A549 (cell line): ENCODE measurements at regions of chr2 and their contacts with region 1.

Region 1: DNA sequence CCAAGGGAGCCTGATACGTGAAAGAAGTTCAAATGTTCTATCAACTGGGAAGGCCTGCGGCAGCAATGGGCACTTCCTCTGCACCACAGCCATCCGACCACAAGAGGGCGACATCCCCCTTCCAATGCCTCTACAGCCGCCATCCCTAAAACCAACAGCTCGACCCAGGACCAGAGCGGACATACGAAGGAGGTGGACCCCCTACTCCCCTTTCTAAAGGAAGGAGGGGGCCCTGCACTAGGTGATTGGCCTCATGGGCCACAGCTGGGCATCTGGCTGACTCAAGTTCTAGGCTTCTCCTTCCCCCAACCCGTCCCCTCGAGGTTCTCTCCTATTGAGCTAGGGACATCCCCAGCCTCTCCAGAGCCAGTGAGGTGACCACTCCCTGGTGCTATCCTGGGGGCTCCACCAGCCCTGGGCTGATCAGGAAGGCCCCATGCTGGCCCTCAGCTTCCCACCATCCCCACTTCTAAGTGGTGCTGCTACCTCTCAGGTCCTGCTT is 217.2 kb downstream of the TNS1 start:
- DNase-seq: peak; percentile 63 to 72
- ATAC-seq: peak; percentile 85 to 90
- H3K4me3 ChIP-seq: no peak overlapping the region
- H3K27ac ChIP-seq: no peak overlapping the region
- H3K4me1 ChIP-seq: peaks cover 3% of the 10 kb centered on the region; the same call in 1 of the 3 replicates
- CTCF ChIP-seq: peak; percentile 95
- EP300 ChIP-seq: no peak
- POLR2A ChIP-seq: no peak
- RAD21 ChIP-seq: peak; percentile 95 to 97

Region 2: DNA sequence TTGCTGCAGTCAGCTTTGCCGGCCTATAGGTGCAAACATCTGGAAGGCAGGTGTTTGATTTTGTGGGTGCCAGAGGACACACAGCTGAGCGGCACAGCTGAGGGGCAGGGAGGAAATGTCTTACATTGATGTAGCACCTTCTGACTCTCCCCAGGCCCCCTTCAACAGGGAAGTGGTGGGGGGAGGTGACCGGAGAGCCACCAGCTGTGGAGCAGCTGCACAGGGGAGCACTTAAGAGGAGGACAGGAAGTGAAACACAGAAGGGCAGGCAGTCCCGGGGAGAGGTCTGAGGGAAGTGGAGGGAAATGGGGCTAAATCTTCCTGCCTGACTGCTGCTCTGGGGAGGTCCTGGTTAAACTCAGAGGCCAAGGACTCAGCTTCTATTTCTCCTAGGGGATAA is 191.9 kb before region 1 on chr2:
- CTCF ChIA-PET with region 1: no interaction called
- POLR2A ChIA-PET with region 1: no interaction called
- DNase-seq: no peak
- ATAC-seq: no peak
- H3K4me3 ChIP-seq: no peak overlapping the region
- H3K27ac ChIP-seq: no peak overlapping the region
- H3K4me1 ChIP-seq: no peaks in the 10 kb centered on the region
- CTCF ChIP-seq: no peak
- EP300 ChIP-seq: no peak
- POLR2A ChIP-seq: no peak
- RAD21 ChIP-seq: no peak

Region 3: DNA sequence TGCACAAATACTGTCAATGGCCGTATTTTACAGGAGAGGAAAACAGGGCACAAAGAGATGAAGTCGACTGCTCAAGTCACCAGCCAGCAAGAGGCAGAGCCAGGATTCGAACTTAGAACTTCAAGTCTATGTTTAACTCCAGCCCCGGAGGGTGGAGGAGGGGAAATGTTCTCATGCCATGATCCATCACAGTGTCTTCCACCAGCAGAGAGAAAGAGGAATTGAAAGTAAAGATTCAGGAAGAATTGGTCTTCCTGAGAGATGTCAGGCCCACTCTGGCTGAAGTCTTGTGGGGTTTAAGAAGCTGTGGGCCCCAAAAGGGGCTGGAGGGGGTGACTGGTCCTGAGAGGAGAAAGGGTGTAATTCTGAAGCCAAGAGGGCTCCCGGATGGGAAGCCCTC is 42.8 kb before region 1 on chr2:
- CTCF ChIA-PET with region 1: no interaction called
- POLR2A ChIA-PET with region 1: no interaction called
- DNase-seq: no peak
- ATAC-seq: no peak
- H3K4me3 ChIP-seq: no peak overlapping the region
- H3K27ac ChIP-seq: no peak overlapping the region
- H3K4me1 ChIP-seq: no peaks in the 10 kb centered on the region
- CTCF ChIP-seq: no peak
- EP300 ChIP-seq: no peak
- POLR2A ChIP-seq: no peak
- RAD21 ChIP-seq: no peak

Region 4: DNA sequence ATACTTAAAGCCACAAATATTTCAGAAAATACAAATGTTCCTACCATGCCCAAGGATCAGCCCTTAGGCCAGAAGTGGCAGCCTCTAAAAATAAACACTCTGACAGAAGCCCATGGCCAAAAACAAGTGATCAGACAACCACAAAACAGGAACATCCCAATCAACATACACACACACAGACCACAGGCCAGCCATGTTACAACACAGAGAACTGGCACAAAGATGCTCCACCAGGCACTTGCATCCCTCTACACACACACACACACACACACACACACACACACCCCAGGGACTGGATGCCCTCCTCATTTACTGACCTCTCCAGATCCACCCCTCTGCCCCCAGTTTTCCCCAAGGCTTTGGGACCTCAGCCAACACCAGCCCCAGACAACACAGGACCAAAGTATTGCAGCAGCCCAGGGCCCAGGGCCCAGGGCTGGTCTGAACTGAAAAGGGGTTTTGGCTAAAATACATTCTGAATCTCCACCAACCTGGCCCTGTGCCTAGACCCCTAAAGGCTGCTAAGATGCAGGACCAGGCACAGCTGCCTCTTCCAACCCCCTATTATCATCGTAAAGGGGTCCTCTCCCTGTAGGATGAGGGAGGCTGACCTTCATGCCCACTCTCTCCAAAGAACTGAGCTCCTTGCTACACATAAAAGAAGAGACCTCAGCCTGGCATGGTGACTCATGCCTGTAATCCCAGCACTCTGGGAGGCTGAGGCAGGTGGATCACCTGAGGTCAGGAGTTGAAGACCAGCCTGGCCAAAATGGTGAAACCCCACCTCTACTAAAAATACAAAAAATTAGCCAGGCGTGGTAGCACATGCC is 65.8 kb after region 1 on chr2:
- CTCF ChIA-PET with region 1: interaction called, 13 read pairs
- POLR2A ChIA-PET with region 1: no interaction called
- DNase-seq: no peak
- ATAC-seq: peak in 1 of 2 experiments; percentile 5; a peak in 1 of 6 replicates
- H3K4me3 ChIP-seq: no peak overlapping the region
- H3K27ac ChIP-seq: peak overlapping the region; percentile 36 to 74; a peak in 4 of 6 replicates
- H3K4me1 ChIP-seq: peaks cover 39% of the 10 kb centered on the region
- CTCF ChIP-seq: no peak
- EP300 ChIP-seq: no peak
- POLR2A ChIP-seq: no peak
- RAD21 ChIP-seq: no peak

Region 5: DNA sequence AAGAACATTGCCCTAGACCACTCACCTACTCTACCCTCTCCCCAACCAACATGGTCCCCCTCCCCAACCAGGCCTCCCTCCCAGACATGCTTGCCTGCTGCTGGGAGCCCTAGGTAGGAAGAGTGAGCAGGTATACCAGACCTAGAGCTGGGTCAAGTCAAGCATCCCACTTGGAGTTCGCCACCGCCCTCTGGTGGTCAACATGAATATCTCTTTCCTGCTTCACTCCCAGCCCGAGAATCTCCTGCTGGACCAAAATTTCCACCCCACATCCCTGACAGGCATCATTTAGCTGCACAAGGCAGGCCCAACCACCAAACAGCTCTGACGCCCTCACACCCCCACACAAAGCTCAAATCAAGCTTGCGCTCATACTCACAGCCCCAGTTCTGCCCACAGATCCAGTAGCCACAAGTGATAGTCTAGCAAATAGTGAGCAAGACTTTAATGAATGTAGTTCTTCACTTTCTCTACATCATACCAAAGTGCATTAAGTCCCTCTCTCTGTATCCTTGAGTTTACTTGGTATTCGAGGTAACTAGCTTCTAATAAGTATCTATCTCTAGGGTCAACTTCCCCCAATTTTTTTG is 101.2 kb after region 1 on chr2:
- CTCF ChIA-PET with region 1: interaction called, 112 read pairs
- POLR2A ChIA-PET with region 1: no interaction called
- DNase-seq: peak; percentile 76 to 81
- ATAC-seq: peak; percentile 80 to 89
- H3K4me3 ChIP-seq: no peak overlapping the region
- H3K27ac ChIP-seq: no peak overlapping the region
- H3K4me1 ChIP-seq: peaks cover 7% of the 10 kb centered on the region; the same call in 2 of the 3 replicates
- CTCF ChIP-seq: peak; percentile 77
- EP300 ChIP-seq: no peak
- POLR2A ChIP-seq: no peak
- RAD21 ChIP-seq: peak; percentile 71 to 81

Region 6: DNA sequence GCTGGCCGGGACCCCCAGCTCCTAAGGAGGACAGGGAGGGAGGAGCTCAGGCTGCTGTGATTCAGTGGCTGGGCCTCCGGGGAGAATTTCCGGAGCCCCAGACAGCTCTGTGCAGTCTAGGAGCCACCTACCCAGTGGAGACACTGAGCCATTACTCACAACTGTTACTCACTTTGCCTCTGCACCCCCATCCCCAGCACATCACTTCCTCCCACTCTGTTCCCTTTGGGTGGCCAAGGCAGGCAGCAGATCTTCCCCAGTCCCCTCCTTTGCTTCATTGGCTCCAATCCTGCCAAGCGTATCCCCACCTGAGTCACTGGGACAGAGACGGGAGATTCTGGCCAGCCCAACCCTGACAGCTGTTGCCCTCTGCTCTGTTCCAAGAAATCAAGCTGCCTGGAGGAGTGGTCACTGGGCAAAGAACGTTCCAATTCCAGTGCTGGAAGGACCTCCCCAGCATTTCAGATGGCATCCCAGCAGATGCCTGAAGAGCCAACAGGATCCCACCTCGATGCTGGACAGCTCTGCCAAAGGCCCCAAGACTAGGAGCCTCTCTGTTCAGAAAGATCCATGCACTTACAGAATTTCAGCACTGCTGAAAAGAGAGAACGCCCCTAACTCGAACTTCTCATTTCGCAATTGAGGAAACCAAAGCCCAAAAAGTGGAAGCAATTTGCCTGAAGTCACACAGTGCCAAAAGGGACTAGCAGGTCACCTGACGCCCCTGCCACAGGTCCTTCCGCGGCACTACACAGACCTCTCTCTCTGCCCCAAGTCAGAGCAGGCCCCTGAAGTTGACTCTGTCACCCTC is 148.9 kb after region 1 on chr2:
- CTCF ChIA-PET with region 1: interaction called, 12 read pairs
- POLR2A ChIA-PET with region 1: no interaction called
- DNase-seq: peak; percentile 55 to 73
- ATAC-seq: peak; percentile 90
- H3K4me3 ChIP-seq: no peak overlapping the region
- H3K27ac ChIP-seq: peak overlapping the region; percentile 88 to 90
- H3K4me1 ChIP-seq: peaks cover 78% of the 10 kb centered on the region
- CTCF ChIP-seq: no peak
- EP300 ChIP-seq: peak; percentile 44 to 74; a peak in 3 of 5 replicates
- POLR2A ChIP-seq: no peak
- RAD21 ChIP-seq: peak in 1 of 2 experiments; percentile 26; a peak in 1 of 5 replicates

Region 7: DNA sequence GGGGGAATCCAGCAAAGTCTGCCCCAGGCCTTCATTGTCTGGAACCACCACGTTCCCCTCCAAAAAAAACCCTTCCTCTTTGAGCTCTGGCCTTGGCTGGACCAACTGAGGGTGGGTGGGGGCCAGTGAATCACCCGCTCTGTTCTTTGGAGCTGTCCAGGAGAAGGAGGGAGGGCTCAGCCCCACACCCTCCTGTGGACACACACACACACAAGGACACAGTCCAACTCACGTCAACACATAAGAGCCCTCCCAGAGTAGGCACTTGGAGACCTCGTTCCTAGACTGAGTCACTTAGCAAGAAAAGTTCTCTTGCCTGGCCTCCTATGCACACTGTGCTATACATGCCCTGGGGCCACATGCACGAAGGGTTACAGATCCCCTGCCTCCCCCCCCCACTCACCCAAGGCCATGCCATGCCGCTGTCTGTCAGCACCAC is 218.4 kb after region 1 on chr2:
- CTCF ChIA-PET with region 1: interaction called, 15 read pairs
- POLR2A ChIA-PET with region 1: no interaction called
- DNase-seq: peak in 1 of 2 experiments; percentile 73
- ATAC-seq: peak; percentile 51 to 77; a peak in 5 of 6 replicates
- H3K4me3 ChIP-seq: no peak overlapping the region
- H3K27ac ChIP-seq: peak overlapping the region; percentile 79 to 91
- H3K4me1 ChIP-seq: peaks cover 74% of the 10 kb centered on the region
- CTCF ChIP-seq: no peak
- EP300 ChIP-seq: peak in 1 of 2 experiments; percentile 38; a peak in 1 of 5 replicates
- POLR2A ChIP-seq: no peak
- RAD21 ChIP-seq: no peak

Region 8: GRCh38 chr2:218046238-218046637 is 260.6 kb after region 1 on chr2:
- CTCF ChIA-PET with region 1: interaction called, 122 read pairs
- POLR2A ChIA-PET with region 1: no interaction called
- DNase-seq: no peak
- ATAC-seq: no peak
- H3K4me3 ChIP-seq: no peak overlapping the region
- H3K27ac ChIP-seq: no peak overlapping the region
- H3K4me1 ChIP-seq: no peaks in the 10 kb centered on the region
- CTCF ChIP-seq: no peak
- EP300 ChIP-seq: no peak
- POLR2A ChIP-seq: no peak
- RAD21 ChIP-seq: no peak